GM13976 (cell line): ENCODE measurements at regions of chr20 and their contacts with region 1.

Region 1: GRCh38 chr20:43749734-43750294 is 23.0 kb upstream of the GTSF1L start:
- DNase-seq: peak; percentile 87
- CTCF ChIP-seq: peak; percentile 98

Region 2: GRCh38 chr20:43839793-43840199 is 90.0 kb after region 1 on chr20:
- in situ Hi-C with region 1: loop called (anchors 10 kb)
- DNase-seq: peak; percentile 53
- CTCF ChIP-seq: no peak

Region 3: DNA sequence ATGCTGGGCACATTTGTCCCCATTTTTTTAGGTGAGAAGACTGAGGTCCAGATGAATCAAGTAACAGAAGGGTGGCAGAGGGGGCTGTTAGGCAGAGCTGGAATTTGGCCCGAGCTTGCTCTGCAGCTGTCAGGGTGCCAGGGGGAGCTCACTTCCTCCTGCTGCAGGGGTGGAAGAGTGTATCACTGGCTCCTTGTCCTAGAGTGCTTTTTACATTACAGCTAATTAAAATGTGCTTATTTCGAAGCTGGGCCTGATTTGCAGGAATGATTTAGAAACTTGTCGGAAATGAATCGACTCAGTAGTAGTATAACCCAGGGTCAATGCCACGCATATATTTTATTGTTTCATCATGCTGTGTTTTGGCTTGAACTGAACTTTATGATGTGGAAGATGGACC is 176.0 kb after region 1 on chr20:
- in situ Hi-C with region 1: loop called (anchors 10 kb)
- DNase-seq: no peak
- CTCF ChIP-seq: peak; percentile 10

Region 4: GRCh38 chr20:44014807-44015732 is 265.3 kb after region 1 on chr20:
- in situ Hi-C with region 1: no loop called
- DNase-seq: no peak
- CTCF ChIP-seq: no peak